ENCODE measurements at regions of chr5 and their contacts with region 1.

Region 1: DNA sequence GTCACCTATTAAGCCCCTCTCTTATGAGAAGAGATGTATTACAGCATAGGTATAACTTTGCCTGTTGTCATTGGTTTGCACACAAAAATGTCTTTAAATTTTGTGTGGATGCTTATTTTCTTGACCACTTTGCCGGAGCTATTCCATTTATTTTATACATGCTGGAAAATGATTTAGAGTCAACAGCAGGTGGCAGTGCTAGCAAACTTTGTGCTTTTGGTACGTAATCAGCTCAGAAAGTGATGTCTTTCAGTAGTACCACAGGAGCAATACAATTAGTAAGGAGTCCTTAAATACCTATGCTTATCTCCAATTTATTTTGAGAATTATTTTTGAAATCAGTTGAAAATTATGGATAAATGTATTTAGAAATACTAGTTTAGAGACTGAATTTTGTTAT is 19.8 kb upstream of the NUDT12 start:
- DNase-seq: peak in 1 of 2 donors; percentile 5
- ATAC-seq: no peak
- H3K4me3 ChIP-seq: no peak overlapping the region
- H3K27ac ChIP-seq: no peak overlapping the region
- H3K4me1 ChIP-seq: no peaks in the 10 kb centered on the region
- H3K27me3 ChIP-seq: peaks cover 0 to 7% (median 0%) of the 10 kb centered on the region in 7 donors
- CTCF ChIP-seq: peak; percentile 6 to 60 (median 51)

Region 2: DNA sequence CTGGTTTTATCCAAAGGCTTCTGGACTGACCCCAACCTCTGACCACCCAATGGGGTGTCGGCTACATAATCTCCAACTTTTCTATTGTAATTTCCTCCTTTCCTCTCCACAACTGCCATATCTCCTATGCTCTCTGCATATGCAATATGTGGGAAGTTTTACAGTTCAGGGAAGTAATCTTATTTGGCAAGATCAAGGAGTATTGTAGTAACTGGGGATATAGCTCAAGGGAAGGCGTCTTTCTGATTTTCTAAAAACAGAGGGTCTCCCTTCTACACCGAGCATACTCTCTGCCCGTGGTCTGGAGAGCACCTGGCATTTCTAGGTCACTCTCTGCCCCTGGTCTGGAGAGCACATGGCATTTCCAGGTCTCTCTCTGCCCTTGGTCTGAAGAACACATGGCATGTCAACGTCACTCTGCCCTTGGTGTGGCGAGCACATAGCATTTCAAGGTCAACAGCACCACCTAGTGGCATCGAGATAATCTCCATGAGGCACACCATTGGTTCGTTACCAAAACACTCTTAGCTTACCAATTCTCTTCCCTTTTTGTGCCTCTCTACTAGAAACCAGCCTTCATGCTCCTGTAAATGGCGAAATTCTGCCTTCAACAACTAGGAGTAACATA is 596.6 kb after region 1 on chr5:
- intact Hi-C with region 1: loop called in 5 of 10 experiments (anchors 5 kb)
- DNase-seq: peak in 1 of 2 donors; percentile 15
- ATAC-seq: peak in 3 of 8 donors; percentile 55 to 59 (median 58)
- H3K4me3 ChIP-seq: no peak overlapping the region
- H3K27ac ChIP-seq: no peak overlapping the region
- H3K4me1 ChIP-seq: no peaks in the 10 kb centered on the region
- H3K27me3 ChIP-seq: no peaks in the 10 kb centered on the region
- CTCF ChIP-seq: peak in 7 of 9 donors; percentile 17 to 59 (median 42)

Region 3: DNA sequence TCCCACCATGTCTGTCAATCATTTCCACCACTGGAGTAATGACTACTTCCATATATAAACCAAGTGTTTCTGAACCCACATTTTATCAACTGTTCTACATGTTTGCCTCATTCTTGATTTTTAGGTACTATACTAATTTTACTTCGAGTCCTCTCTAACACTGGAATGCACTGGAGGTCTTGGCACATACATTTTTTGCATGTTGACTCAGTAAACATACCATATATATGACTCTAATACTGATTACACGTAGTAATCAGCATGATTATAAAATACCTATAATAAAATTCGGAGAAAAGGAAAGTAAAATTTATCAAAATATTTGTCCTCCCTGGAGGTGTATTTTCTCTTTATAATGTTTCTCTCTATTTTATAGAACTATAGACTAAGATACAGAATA is 601.9 kb after region 1 on chr5:
- intact Hi-C with region 1: loop called in 5 of 10 experiments (anchors 5 kb)
- DNase-seq: no peak
- ATAC-seq: no peak
- H3K4me3 ChIP-seq: no peak overlapping the region
- H3K27ac ChIP-seq: no peak overlapping the region
- H3K4me1 ChIP-seq: no peaks in the 10 kb centered on the region
- H3K27me3 ChIP-seq: no peaks in the 10 kb centered on the region
- CTCF ChIP-seq: no peak

Measured in heart right ventricle (tissue), 16 donors.